ENCODE measurements at regions of chr10 and their contacts with region 1.

Region 1: DNA sequence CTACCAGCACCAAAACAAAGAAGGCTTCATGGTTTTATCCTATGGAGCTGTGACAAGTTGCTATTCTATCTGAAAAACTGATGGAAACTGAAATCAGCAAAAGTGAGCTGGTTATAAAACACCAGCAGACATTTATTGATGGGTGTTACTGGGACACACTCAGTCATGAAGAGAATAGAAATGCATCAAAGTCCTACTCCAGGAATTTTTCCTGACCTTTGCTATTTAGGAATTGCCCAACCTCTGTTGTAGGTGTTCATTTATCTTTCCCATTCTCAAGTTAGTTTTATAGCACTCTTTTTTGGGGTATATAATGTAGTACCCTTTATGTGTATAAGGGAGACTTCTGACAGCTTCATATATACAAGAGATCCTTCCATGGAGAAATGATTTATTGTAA is 533.2 kb downstream of the REEP3 start:
- DNase-seq: no peak
- H3K4me3 Mint-ChIP-seq: no peak overlapping the region
- H3K27ac Mint-ChIP-seq: no peak overlapping the region
- H3K4me1 Mint-ChIP-seq: no peaks in the 10 kb centered on the region
- H3K27me3 Mint-ChIP-seq: no peaks in the 10 kb centered on the region
- CTCF ChIP-seq: no peak

Region 2: DNA sequence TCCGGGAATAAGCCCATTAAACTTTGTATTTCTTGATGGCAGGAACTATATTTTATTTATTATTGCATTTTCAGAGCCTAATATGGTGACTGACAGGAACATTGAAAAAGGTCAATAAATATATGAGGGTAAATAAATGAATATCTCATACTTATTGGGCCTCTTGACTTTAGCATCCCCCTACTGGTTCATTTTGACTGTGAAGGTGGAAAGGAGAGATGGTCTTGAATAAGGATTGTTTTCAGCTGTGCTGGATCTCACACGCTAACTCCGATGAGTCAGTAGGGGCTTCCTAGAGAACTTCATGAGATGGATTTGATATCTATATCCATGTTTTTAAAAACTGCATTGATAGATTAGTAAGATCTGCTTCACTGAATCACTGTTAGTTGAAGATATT is 492.8 kb after region 1 on chr10:
- CTCF ChIA-PET with region 1: no interaction called
- intact Hi-C with region 1: loop called (anchors 10 kb)
- DNase-seq: no peak
- H3K4me3 Mint-ChIP-seq: no peak overlapping the region
- H3K27ac Mint-ChIP-seq: no peak overlapping the region
- H3K4me1 Mint-ChIP-seq: peaks cover 8% of the 10 kb centered on the region
- H3K27me3 Mint-ChIP-seq: no peaks in the 10 kb centered on the region
- CTCF ChIP-seq: no peak